ENCODE measurements at regions of chr3 and their contacts with region 1.

Region 1: DNA sequence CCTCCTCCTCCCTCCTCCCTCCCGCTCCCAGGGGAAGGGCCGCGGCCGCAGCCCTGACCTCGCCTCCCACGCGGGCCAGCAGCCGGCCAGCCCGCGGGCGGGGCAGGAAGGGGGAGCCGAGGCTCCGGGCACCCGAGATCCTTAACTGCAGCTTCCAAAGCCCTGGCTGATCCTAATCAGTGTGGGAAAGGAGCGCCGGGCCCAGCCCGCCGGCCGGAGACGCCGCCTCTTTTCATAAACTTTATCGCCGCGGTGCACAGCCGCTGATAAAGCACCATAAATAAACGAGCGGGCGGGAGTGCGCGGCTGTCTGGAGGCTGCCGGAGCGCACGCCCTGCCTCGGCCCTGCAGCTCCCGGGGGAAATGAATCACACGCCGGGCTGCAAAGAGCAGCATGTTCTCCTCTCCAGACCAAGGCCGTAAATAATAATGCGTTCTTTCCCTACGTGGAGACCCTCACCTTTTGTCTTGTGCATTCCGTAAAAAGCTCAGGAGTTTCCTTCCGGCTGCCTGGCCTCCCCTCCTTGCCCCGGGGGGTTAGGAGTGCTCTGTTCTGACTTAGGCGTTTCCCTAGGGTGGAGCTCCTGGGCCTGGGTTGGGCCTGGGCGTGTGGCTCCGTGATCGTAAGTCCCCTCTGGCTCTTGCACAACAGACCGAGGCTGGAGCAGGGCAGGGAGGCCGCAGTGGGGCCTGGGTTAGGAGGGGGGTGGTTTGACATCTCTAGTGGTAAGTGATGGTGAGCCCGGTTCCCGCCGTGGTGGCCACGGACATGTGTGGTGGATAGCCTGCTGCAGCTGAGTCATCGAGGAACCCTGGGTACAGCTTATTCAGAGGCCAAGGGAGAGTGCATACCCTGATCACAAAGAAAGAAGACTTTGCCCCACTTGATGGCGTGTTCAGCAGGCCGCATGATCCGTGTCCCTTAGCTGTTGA is 132.6 kb upstream of the HES1 start:
- DNase-seq: peak; percentile 99
- H3K4me3 ChIP-seq: no peak overlapping the region
- H3K27ac ChIP-seq: peak overlapping the region; percentile 97
- H3K4me1 ChIP-seq: peaks cover 35% of the 10 kb centered on the region
- H3K27me3 ChIP-seq: no peaks in the 10 kb centered on the region
- CTCF ChIP-seq: no peak
- POLR2A ChIP-seq: peak; percentile 22

Region 2: DNA sequence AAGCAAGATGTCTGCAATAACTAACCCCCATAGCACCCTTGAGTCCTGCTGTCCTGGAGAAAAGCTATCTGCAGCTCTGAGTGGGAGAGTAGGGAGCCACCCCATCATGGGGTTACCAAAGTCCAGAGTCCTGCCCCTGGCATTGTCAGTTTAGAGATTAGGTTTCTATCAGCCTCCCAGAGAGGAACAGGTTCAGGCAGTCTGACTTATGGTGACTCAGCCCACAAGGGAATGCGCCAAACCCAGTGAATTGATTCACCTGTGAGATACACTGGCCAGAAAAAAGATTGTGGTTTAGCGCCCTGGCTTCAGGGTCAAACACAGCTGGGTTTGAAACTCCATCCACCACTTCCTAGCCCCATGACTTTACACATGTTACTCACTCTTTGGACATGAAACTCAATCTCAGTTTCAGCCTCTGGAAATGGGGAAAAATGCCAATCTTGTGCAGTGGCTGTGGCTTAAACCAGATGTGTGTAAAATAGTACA is 131.1 kb before region 1 on chr3:
- CTCF ChIA-PET with region 1: no interaction called
- POLR2A ChIA-PET with region 1: no interaction called
- dilution Hi-C with region 1: no loop called
- intact Hi-C with region 1: loop called (anchors 1 kb)
- DNase-seq: peak; percentile 72
- H3K4me3 ChIP-seq: no peak overlapping the region
- H3K27ac ChIP-seq: peak overlapping the region; percentile 6
- H3K4me1 ChIP-seq: peaks cover 33% of the 10 kb centered on the region
- H3K27me3 ChIP-seq: no peaks in the 10 kb centered on the region
- CTCF ChIP-seq: no peak
- POLR2A ChIP-seq: peak; percentile 30

Region 3: DNA sequence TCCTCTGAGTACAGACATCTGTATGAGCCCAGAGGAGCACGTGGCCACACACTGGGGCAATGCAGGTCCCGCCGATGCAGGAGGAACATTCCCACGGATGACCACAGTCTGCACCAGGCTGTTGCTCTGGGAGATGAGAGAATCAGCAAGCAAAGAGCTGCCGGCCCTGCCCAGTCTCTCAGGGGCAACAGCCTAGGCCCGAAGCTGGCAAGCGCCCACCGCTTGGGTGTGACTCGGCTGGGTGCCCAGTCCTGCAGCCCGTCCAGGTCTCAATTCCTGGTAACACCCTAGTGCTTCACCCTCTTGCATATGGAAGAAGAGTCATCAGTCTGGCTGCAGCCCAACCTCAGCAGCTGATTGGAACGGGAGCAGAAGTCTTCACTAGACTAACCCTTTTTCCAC is 21.1 kb before region 1 on chr3:
- CTCF ChIA-PET with region 1: interaction called, 3 read pairs
- POLR2A ChIA-PET with region 1: no interaction called
- dilution Hi-C with region 1: no loop called
- intact Hi-C with region 1: loop called (anchors 1 kb)
- DNase-seq: peak; percentile 43
- H3K4me3 ChIP-seq: no peak overlapping the region
- H3K27ac ChIP-seq: no peak overlapping the region
- H3K4me1 ChIP-seq: peaks cover 27% of the 10 kb centered on the region
- H3K27me3 ChIP-seq: no peaks in the 10 kb centered on the region
- CTCF ChIP-seq: no peak
- POLR2A ChIP-seq: no peak

Region 4: GRCh38 chr3:194089357-194090177 is 86.2 kb after region 1 on chr3:
- CTCF ChIA-PET with region 1: interaction called, 6 read pairs
- POLR2A ChIA-PET with region 1: interaction called, 9 read pairs
- dilution Hi-C with region 1: no loop called
- intact Hi-C with region 1: loop called (anchors 1 kb)
- DNase-seq: peak; percentile 99
- H3K4me3 ChIP-seq: no peak overlapping the region
- H3K27ac ChIP-seq: peak overlapping the region; percentile 94
- H3K4me1 ChIP-seq: peaks cover 22% of the 10 kb centered on the region
- H3K27me3 ChIP-seq: no peaks in the 10 kb centered on the region
- CTCF ChIP-seq: no peak
- POLR2A ChIP-seq: no peak

Region 5: DNA sequence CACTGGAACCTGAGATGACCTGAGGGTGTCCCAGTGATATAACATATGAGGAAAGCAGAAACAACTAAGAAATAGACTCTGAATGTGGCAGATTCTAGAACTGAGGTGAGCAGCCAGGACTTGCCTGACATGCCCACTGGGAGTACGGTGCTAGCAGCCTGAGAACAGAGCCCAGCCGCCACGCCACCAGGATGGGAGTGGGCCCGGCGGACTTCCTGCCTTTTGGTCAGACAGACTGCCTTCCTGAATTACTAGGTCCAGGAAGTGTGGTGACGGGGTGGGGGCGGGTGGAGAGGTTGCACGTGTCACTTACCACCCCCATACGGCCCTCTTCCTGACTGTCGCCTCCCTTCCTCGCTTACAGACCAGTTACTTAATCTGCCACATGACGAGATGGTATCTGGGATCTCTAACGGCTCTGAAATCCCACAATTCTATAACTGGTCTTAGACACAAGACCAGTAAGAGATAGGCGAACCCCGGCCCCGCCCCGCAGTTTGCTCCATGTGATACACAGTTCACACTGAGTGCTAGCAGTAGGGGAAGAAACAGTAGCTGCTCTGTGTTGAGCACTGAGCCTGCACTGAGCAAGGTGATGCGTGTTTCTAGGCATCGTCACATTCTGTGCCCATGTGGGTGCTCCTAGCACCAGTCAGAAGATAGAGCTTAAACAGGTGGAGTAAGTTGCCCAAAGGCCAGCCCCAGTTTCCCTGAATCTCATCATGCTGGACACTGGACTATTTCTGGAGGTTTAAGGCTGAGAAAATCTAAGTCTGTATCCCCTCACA is 252.1 kb after region 1 on chr3:
- CTCF ChIA-PET with region 1: no interaction called
- POLR2A ChIA-PET with region 1: no interaction called
- dilution Hi-C with region 1: no loop called
- intact Hi-C with region 1: loop called (anchors 1 kb)
- DNase-seq: peak; percentile 94
- H3K4me3 ChIP-seq: no peak overlapping the region
- H3K27ac ChIP-seq: peak overlapping the region; percentile 85
- H3K4me1 ChIP-seq: peaks cover 14% of the 10 kb centered on the region
- H3K27me3 ChIP-seq: no peaks in the 10 kb centered on the region
- CTCF ChIP-seq: peak in 1 of 2 donors; percentile 6
- POLR2A ChIP-seq: no peak

Region 6: GRCh38 chr3:194315088-194315964 is 311.9 kb after region 1 on chr3:
- CTCF ChIA-PET with region 1: interaction called, 41 read pairs
- POLR2A ChIA-PET with region 1: no interaction called
- dilution Hi-C with region 1: no loop called
- intact Hi-C with region 1: loop called (anchors 1 kb)
- DNase-seq: peak; percentile 84
- H3K4me3 ChIP-seq: peak overlapping the region; percentile 18 to 44 (median 37)
- H3K27ac ChIP-seq: peak overlapping the region; percentile 45
- H3K4me1 ChIP-seq: peaks cover 7% of the 10 kb centered on the region
- H3K27me3 ChIP-seq: peaks cover 4 to 5% of the 10 kb centered on the region in 2 experiments
- CTCF ChIP-seq: peak; percentile 86 to 92
- POLR2A ChIP-seq: no peak